ENCODE measurements at regions of chr4 and their contacts with region 1.

Region 1: GRCh38 chr4:145557720-145558119 is 61.5 kb upstream of the MMAA start:
- DNase-seq: peak; percentile 68 to 73
- H3K4me3 ChIP-seq: no peak overlapping the region
- H3K4me1 ChIP-seq: peaks cover 2% of the 10 kb centered on the region; the same call in 1 of the 2 replicates
- H3K27me3 ChIP-seq: no peaks in the 10 kb centered on the region

Region 2: GRCh38 chr4:145234091-145234706 is 323.5 kb before region 1 on chr4:
- in situ Hi-C with region 1: loop called (anchors 25 kb)
- DNase-seq: peak; percentile 65 to 74
- H3K4me3 ChIP-seq: no peak overlapping the region
- H3K4me1 ChIP-seq: no peaks in the 10 kb centered on the region
- H3K27me3 ChIP-seq: no peaks in the 10 kb centered on the region